Psoas muscle (tissue), 8 donors: ENCODE measurements at regions of chr20 and their contacts with region 1.

Region 1: GRCh38 chr20:2946988-2947961 is 74.0 kb downstream of the PTPRA start:
- DNase-seq: no peak
- ATAC-seq: no peak
- H3K4me3 ChIP-seq: no peak overlapping the region
- H3K27ac ChIP-seq: no peak overlapping the region
- H3K4me1 ChIP-seq: peaks cover 29% of the 10 kb centered on the region
- H3K27me3 ChIP-seq: no peaks in the 10 kb centered on the region
- CTCF ChIP-seq: no peak

Region 2: DNA sequence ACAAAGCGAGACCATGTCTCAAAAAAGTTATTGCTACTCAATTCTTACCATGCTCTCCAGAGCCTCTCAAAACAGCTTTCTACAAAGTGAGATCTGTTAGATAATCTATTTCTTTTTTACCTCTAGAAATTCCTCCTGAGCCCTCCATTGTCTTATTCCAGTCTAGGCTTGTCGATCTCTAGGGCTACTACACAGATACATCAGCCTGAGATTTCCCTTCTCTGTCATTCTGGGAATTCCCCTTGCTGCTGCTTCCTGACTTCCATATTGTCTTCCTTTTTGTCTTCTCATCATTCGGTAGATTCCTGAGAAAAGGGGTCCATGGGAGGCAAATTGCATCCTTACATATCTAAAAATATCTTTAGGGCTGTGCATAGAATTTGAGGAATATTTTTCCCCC is 20.6 kb after region 1 on chr20:
- intact Hi-C with region 1: loop called in 1 of 2 experiments (anchors 2 kb)
- DNase-seq: no peak
- ATAC-seq: no peak
- H3K4me3 ChIP-seq: no peak overlapping the region
- H3K27ac ChIP-seq: no peak overlapping the region
- H3K4me1 ChIP-seq: no peaks in the 10 kb centered on the region
- H3K27me3 ChIP-seq: no peaks in the 10 kb centered on the region
- CTCF ChIP-seq: no peak